ENCODE measurements at regions of chr7 and their contacts with region 1.

Region 1: DNA sequence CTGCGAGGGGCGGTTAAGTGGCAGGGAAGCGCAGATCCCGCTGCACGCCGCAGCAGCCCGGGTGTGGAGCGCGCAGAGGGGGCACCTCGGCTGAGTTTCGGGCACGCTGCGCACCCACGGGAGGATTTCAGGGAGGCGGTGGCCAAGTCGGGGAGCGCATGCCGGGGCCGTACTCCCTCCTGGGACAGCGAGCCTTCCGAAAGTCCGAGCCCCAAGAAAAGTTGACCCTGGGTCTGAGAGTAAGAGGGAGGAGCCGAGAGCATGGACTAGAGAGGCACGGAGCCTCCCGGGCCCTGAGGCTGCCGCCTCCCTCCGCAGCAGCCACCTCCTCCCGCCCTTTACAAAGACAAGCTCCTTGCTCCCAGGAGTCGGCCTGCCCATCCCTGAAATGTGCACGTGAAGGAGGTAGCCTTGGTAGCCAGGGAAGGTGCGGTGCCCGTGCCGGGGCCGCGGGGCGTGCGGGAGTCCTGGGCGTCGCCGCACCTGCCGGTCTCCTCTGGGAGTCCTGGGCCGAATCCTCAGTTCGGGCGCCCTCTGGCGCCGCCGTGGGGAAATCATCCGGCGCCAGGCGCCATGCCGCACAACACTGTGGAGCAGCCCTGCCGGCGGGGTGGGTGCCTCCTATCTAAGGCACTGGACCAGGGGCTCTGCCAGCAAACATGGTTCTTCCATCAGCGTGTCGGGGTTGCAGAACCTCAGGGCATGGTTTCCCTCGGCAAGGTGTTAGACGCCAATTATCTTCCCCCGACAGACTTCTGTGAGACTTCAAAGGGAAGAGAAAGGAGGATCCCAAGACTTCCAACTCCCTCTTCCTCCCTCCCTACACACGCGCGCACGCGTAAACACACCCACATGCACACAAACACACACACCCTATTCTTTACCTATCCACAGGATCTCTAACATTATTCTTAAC is 104.0 kb downstream of the TRIL start:
- DNase-seq: peak; percentile 97
- H3K4me3 Mint-ChIP-seq: peak overlapping the region; percentile 96
- H3K27ac Mint-ChIP-seq: peak overlapping the region; percentile 60
- H3K4me1 Mint-ChIP-seq: peaks cover 45% of the 10 kb centered on the region
- H3K27me3 Mint-ChIP-seq: no peaks in the 10 kb centered on the region
- CTCF ChIP-seq: peak; percentile 95

Region 2: GRCh38 chr7:28298870-28299518 is 555.1 kb before region 1 on chr7:
- CTCF ChIA-PET with region 1: interaction called, 5 read pairs
- intact Hi-C with region 1: loop called (anchors 1 kb)
- DNase-seq: peak; percentile 74
- H3K4me3 Mint-ChIP-seq: no peak overlapping the region
- H3K27ac Mint-ChIP-seq: no peak overlapping the region
- H3K4me1 Mint-ChIP-seq: no peaks in the 10 kb centered on the region
- H3K27me3 Mint-ChIP-seq: no peaks in the 10 kb centered on the region
- CTCF ChIP-seq: peak; percentile 67

Region 3: GRCh38 chr7:28360739-28361138 is 493.4 kb before region 1 on chr7:
- CTCF ChIA-PET with region 1: no interaction called
- intact Hi-C with region 1: loop called (anchors 1 kb)
- DNase-seq: peak; percentile 19
- H3K4me3 Mint-ChIP-seq: no peak overlapping the region
- H3K27ac Mint-ChIP-seq: no peak overlapping the region
- H3K4me1 Mint-ChIP-seq: peaks cover 34% of the 10 kb centered on the region
- H3K27me3 Mint-ChIP-seq: no peaks in the 10 kb centered on the region
- CTCF ChIP-seq: no peak

Region 4: DNA sequence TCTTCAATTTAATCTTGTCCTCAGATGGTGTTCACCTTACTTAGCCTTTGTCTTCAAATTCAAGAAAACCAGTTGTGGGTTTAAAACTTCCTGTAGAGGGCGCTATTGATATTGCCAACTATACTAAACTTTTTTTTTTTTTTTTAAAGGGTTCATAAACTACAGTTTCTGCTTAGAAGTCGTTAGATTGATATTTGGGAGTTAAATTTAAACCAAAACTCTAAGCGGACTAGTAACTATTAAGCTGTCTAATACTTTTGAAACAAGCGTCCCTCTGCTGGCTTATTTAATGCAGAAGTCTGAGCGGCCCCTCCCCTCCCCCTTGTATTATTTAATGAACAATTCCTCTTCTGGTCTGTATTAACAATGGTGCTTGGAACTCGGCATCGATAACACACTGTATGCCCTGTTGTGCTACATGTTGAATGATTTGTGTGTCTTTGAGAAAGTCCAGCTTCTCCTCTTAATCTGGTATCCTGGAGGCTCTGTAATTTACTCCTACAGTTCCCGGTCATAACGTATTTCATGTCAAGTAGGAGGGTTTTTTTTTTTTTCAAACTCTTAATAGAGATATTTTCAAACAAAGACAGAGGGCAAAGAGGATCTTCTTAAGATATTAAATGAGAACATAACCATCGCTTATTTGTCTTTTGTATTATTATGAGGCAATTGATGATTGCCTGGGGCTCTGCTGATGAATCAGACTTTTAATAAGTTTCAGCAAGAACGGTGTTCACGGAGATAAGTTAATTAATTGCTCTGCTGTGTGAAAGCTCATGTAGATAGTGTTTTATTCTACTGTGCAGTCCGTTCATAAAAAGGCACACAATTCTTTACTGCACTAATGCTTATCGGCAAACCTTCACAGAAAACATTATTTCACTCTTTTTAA is 464.3 kb before region 1 on chr7:
- CTCF ChIA-PET with region 1: no interaction called
- intact Hi-C with region 1: loop called (anchors 1 kb)
- DNase-seq: peak; percentile 39
- H3K4me3 Mint-ChIP-seq: peak overlapping the region; percentile 70
- H3K27ac Mint-ChIP-seq: peak overlapping the region; percentile 46
- H3K4me1 Mint-ChIP-seq: peaks cover 15% of the 10 kb centered on the region
- H3K27me3 Mint-ChIP-seq: no peaks in the 10 kb centered on the region
- CTCF ChIP-seq: peak; percentile 77

Region 5: GRCh38 chr7:28558236-28558635 is 295.9 kb before region 1 on chr7:
- CTCF ChIA-PET with region 1: no interaction called
- intact Hi-C with region 1: loop called (anchors 5 kb)
- DNase-seq: peak; percentile 63
- H3K4me3 Mint-ChIP-seq: no peak overlapping the region
- H3K27ac Mint-ChIP-seq: peak overlapping the region; percentile 40
- H3K4me1 Mint-ChIP-seq: peaks cover 61% of the 10 kb centered on the region
- H3K27me3 Mint-ChIP-seq: no peaks in the 10 kb centered on the region
- CTCF ChIP-seq: no peak

Region 6: DNA sequence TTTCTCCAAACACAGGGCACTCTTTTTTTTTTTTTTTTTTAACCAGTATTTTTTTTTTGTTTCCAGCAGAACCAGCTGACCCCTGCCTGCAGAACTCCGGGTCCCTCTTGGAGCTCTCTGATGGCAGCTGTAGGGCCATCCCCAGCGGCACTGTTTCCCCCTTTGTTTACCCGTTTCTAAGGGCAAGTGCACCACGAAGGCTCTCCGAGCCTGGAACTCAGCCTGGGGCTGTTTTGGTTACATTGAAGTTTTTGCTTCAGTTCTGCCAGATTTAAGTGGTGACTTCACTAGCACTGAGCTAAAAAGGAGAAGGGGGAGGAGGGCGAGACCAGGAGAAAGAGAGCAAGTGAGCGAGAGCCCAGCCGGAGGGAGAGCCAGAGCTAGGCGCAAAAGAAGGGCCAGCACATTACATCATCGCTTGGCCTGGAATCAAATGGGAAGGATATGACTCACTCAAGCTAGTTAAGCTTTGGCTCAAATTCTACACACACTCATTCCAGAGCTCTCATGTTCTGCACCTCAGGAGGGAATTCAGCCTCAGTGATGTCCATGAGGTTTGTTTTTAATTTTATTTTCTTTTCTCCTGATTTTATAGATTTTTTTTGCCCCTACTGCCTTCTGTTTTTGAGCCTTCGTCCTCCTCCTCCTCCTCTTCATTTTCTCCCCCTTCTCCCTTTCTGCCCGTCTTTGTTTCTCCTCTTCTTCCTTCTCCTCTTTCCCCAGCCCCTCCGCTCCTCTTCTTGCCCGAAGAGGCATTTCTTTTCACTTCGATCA is 168.3 kb before region 1 on chr7:
- CTCF ChIA-PET with region 1: interaction called, 3 read pairs
- intact Hi-C with region 1: loop called (anchors 5 kb)
- DNase-seq: peak; percentile 91
- H3K4me3 Mint-ChIP-seq: no peak overlapping the region
- H3K27ac Mint-ChIP-seq: no peak overlapping the region
- H3K4me1 Mint-ChIP-seq: peaks cover 15% of the 10 kb centered on the region
- H3K27me3 Mint-ChIP-seq: no peaks in the 10 kb centered on the region
- CTCF ChIP-seq: no peak

Region 7: DNA sequence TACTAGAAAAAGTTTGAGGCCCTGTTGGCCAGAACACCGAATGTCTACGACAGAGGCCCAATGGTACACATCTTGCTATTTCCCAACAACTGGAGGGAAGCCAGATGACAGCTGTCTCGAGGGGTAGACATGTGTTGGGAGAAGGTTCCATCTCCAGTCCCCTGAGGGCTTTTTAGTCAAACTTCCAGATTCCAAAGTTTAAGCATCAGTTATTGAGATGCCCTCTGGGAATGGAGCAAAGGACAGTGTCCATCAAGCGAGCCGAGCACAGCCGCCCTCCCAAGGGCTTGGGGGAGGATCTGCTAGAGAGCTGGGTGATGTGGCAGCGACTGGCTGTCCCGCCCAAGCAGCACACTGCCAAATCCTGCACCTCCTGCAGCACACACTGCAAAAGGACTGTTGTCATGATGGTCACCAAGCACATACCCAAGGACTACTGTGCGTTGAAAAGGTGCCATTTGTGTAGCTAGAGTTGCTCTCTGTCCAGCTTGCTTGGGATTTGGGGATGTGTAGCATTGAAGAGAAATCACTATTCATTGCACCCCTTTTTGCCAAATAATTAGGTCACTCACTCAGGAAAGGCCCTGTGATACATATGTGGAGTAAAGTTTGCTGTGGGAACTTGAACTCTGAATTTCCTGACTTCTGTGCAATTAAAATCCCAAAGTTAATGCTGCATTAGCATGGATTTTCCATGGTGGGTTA is 60.6 kb before region 1 on chr7:
- CTCF ChIA-PET with region 1: no interaction called
- intact Hi-C with region 1: no loop called
- DNase-seq: no peak
- H3K4me3 Mint-ChIP-seq: no peak overlapping the region
- H3K27ac Mint-ChIP-seq: no peak overlapping the region
- H3K4me1 Mint-ChIP-seq: no peaks in the 10 kb centered on the region
- H3K27me3 Mint-ChIP-seq: no peaks in the 10 kb centered on the region
- CTCF ChIP-seq: no peak